Astrocyte of the spinal cord (primary cell): ENCODE measurements at regions of chr14 and their contacts with region 1.

Region 1: DNA sequence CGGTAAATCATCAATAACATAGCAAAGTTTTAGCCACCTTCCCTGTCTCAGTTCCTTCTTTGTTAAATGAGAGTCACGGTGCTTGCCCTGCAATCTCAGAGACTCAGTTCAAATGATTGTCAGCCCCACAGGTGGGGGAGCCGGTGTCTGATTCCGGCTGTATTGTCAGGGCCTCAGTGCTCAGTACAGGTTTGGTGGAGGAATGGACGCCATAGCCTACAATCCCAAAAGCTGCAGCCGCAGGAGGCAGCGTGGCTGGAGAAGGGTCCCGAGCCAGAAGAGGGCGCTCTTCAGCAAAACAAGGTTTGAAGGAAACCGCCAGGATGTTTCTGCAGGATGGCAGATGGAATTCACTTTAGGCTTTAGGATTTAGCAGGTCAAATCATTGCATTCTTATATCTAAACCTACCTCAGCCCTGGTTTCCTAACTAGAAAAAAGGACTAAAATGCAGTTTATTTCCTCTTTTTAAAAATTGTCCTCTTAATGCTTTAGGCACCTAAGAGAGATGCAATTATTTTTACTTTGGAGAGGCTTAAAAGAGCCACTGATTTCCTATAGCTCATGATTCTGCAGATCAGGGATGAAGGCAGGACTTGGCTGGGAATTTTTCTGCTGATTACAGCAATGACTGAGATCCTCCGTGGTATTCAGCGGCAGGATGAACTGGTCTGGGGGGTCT is 29.2 kb downstream of the FOS start:
- DNase-seq: peak; percentile 80
- H3K4me3 ChIP-seq: no peak overlapping the region
- CTCF ChIP-seq: peak; percentile 95

Region 2: DNA sequence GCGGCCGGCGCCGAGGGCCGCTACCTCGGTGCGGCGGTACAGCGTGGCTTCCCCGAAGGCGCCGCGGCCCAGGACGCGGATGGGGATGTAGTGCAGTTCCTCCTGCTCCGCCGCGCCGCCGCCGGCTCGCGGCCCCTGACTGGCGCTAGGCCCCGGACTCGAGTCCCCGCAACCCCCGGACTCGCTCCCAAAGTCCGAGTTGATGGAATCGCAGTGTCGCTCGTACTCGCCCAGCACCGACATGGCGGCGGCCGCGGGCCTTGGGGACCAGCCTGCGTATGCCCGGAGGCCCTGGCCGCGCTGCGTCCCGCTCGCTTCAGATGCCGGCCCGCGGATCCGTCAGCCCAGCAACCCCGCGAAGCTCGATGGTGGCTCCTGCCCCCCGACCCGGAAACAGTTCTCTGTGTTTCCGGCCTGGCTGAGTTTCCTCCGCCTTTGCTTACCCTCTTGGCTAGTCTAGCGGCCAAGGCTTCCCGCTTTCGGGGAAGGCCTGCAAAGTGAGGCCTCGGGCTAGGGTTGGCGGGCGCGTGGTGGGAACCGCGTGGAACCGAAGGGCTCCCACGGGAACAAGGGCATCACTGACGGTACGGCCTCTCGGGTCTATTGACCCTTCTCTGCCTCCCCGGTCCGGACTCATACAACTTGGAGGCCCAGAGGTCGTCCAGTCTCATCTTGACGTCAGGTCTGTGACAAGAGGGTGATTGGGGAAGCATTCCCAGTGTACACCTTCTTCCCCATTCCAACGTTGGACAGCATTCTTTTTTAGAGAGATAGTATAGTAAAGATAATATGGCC is 181.0 kb before region 1 on chr14 and contains the start of gene NEK9:
- in situ Hi-C with region 1: loop called (anchors 10 kb)
- DNase-seq: peak; percentile 86
- H3K4me3 ChIP-seq: peak within 1 kb of the TSS; percentile 53
- CTCF ChIP-seq: no peak

Region 3: DNA sequence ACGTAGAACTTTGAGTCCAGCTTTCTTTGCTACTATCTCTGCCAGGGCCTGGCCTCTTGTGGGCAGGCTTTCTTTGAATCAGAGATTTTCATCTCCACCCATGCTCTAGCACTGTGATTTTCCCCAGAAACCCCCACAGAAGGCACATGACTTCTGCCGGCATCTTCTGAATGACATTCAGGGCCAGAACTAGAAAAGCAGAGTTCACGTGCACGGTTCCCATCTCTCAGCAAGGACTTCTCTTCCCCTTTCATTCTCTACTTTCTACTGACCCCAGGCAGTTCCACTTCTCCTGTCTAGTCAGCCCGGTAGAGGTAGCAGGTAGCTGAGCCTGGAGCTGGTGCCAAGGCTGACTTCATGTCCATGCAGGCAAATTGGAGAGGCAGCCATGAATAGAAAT is 241.3 kb after region 1 on chr14:
- in situ Hi-C with region 1: no loop called
- DNase-seq: no peak
- H3K4me3 ChIP-seq: no peak overlapping the region
- CTCF ChIP-seq: no peak